ENCODE measurements at regions of chr1 and their contacts with region 1.

Region 1: GRCh38 chr1:46667782-46668760 is at the start of gene ATPAF1:
- DNase-seq: peak; percentile 64 to 90
- H3K4me3 ChIP-seq: peak within 1 kb of the TSS; percentile 73 to 95
- H3K27ac ChIP-seq: peak within 1 kb of the TSS; percentile 89 to 91
- H3K4me1 ChIP-seq: peaks cover 0 to 34% (median 22%) of the 10 kb centered on the region in 4 donors
- H3K27me3 ChIP-seq: no peaks in the 10 kb centered on the region
- CTCF ChIP-seq: no peak

Region 2: GRCh38 chr1:46569884-46570725 is 98.0 kb before region 1 on chr1:
- intact Hi-C with region 1: no loop called
- DNase-seq: peak in 1 of 2 donors; percentile 62
- H3K4me3 ChIP-seq: no peak overlapping the region
- H3K27ac ChIP-seq: no peak overlapping the region
- H3K4me1 ChIP-seq: peaks cover 0 to 12% (median 0%) of the 10 kb centered on the region in 4 donors
- H3K27me3 ChIP-seq: no peaks in the 10 kb centered on the region
- CTCF ChIP-seq: no peak

Region 3: DNA sequence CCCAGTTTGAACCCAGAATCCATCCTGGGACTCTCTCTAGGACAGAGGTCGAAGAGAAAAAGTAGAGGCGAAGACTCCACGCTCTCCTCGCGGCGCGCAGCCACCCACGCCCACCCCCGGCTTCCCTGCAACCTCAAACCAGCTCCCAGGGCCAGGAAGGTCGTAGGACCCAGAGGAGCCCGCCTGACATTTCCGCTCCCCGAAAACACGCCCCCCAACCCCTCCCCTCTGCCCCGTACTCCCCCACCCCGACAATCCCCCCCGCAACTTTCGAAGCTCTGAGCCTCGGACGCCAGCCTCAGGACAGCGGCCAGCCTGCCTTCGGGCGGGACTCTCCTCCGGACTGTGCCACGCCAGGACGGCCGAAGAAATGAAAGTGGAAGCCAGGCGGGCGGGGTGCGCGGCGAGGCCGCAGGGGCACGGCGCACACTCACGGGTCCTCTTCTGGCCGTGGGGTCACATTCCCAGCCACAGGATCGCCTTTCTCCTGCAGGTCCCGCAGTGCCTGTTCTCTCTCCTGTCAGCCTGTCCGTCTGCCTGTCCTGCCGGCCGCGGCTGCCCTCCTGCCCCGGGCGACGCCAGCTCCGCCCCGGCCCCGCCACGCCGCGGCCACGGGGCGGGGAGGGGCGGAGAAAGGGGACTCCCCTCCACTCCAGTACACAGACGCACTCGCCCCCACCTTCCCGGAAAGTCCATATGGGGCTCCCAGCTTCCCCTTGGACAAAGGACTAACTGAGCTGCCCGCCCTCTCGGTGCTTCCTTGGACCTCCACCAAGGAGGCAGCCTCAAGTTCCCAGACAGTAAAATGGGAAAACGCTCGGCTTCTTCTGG is 51.6 kb before region 1 on chr1 and contains the start of gene MOB3C:
- intact Hi-C with region 1: loop called (anchors 5 kb)
- DNase-seq: peak; percentile 92 to 96
- H3K4me3 ChIP-seq: peak within 1 kb of the TSS; percentile 91 to 93
- H3K27ac ChIP-seq: peak within 1 kb of the TSS; percentile 94
- H3K4me1 ChIP-seq: peaks cover 13 to 52% (median 46%) of the 10 kb centered on the region in 4 donors
- H3K27me3 ChIP-seq: no peaks in the 10 kb centered on the region
- CTCF ChIP-seq: peak in 1 of 2 experiments; percentile 7

Region 4: GRCh38 chr1:46708121-46708520 is 40.0 kb after region 1 on chr1:
- intact Hi-C with region 1: no loop called
- DNase-seq: no peak
- H3K4me3 ChIP-seq: no peak overlapping the region
- H3K27ac ChIP-seq: no peak overlapping the region
- H3K4me1 ChIP-seq: no peaks in the 10 kb centered on the region
- H3K27me3 ChIP-seq: no peaks in the 10 kb centered on the region
- CTCF ChIP-seq: no peak

Region 5: GRCh38 chr1:46718727-46719622 is 50.9 kb after region 1 on chr1 and contains the start of gene EFCAB14:
- intact Hi-C with region 1: loop called (anchors 5 kb)
- DNase-seq: peak; percentile 93 to 97
- H3K4me3 ChIP-seq: peak within 1 kb of the TSS; percentile 92 to 96
- H3K27ac ChIP-seq: peak within 1 kb of the TSS; percentile 86
- H3K4me1 ChIP-seq: peaks cover 0 to 32% (median 20%) of the 10 kb centered on the region in 4 donors
- H3K27me3 ChIP-seq: no peaks in the 10 kb centered on the region
- CTCF ChIP-seq: peak in 1 of 2 experiments; percentile 5

Region 6: DNA sequence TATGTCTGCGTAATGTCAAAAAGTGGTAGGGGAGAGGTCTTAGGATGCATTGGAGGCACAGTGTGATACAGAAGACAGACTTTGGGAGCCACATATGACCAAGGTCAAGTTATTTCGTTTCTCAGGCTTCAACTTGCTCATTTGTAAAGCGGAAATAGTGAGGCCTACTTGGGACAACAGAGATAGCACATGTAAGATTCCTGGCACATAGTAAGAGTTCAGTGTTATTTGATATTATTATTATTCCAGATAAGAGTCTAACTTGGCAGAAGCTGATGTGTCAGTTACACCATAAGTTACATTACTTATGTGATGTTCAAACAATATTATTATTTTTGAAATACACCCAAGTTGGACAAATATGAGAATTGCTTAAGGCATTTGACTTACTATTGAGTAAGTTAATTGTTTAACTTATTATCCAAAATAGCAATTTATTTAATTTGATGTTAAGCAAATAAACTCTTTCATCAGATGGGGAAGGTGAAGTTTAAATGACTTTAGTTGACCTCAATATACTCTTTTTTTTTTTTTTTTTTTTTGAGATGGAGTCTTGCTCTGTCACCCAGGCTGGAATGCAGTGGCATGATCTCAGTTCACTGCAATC is 345.3 kb after region 1 on chr1:
- intact Hi-C with region 1: no loop called
- DNase-seq: no peak
- H3K4me3 ChIP-seq: no peak overlapping the region
- H3K27ac ChIP-seq: peak overlapping the region; percentile 48 to 63
- H3K4me1 ChIP-seq: peaks cover 0 to 30% (median 2%) of the 10 kb centered on the region in 4 donors
- H3K27me3 ChIP-seq: no peaks in the 10 kb centered on the region
- CTCF ChIP-seq: no peak